PC-3 (cell line): ENCODE measurements at regions of chr2 and their contacts with region 1.

Region 1: GRCh38 chr2:55364189-55365055 is 55.2 kb downstream of the CCDC88A start:
- DNase-seq: peak; percentile 96
- ATAC-seq: peak; percentile 99
- H3K4me3 ChIP-seq: no peak overlapping the region
- H3K27ac ChIP-seq: peak overlapping the region; percentile 8; the same call in 1 of the 2 replicates
- H3K4me1 ChIP-seq: peaks cover 21% of the 10 kb centered on the region
- H3K27me3 ChIP-seq: no peaks in the 10 kb centered on the region
- CTCF ChIP-seq: no peak

Region 2: DNA sequence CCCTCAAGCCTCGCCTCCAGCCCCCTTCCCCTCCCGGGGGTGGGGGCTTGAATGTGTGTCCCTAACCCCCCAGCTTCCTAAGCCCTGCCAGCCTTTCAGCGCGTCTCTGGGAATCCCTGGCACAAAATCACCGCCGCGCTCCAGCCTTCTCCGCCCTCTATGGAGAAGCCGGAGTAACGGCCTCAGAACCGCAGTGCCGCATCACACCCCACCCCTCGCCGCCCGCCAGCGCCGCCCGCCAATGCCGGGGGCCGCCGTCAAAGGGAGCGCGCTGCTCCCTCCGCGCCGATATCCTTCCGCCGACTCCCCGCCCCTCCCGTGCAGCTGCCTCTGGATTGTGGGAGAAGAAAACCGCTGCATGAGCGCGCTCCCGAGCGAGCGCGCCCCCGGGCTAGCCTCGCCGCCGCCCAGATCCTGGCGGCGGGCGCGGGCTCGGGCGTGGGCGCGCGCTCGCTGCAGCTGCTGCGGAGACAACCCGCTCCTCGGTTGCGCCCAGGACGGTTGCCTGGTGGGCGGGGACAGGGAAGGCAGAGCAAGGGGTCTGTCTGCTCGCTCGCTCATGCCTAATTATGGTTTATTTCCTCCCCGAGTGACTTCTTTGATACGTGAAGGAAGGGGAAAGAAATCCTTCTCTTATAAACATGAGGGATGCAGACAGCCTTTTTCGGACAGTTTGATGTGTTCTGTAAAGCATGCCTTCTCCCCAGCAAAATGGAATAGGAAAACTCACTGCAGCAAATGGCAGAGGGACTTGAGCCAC is 55.4 kb after region 1 on chr2 and contains the start of gene CCDC88A:
- CTCF ChIA-PET with region 1: no interaction called
- POLR2A ChIA-PET with region 1: no interaction called
- intact Hi-C with region 1: loop called (anchors 2 kb)
- DNase-seq: peak; percentile 94
- ATAC-seq: peak; percentile 91
- H3K4me3 ChIP-seq: peak within 1 kb of the TSS; percentile 82
- H3K27ac ChIP-seq: no peak within 1 kb of the TSS
- H3K4me1 ChIP-seq: peaks cover 23% of the 10 kb centered on the region
- H3K27me3 ChIP-seq: no peaks in the 10 kb centered on the region
- CTCF ChIP-seq: 0 out of 2 replicates have a peak, but pooled peaks have one; percentile 16
- total RNA-seq, gene CCDC88A: 21.6 and 28.7 TPM in 2 replicates